ENCODE measurements at regions of chr1 and their contacts with region 1.

Region 1: GRCh38 chr1:194830387-194830786 is 1644.0 kb upstream of the B3GALT2 start:
- DNase-seq: no peak
- ATAC-seq: no peak

Region 2: GRCh38 chr1:194818674-194819073 is 11.7 kb before region 1 on chr1:
- intact Hi-C with region 1: loop called (anchors 1 kb)
- DNase-seq: no peak
- ATAC-seq: no peak

Measured in Right ventricle myocardium inferior (tissue), 1 donor.